ENCODE measurements at regions of chr3 and their contacts with region 1.

Region 1: DNA sequence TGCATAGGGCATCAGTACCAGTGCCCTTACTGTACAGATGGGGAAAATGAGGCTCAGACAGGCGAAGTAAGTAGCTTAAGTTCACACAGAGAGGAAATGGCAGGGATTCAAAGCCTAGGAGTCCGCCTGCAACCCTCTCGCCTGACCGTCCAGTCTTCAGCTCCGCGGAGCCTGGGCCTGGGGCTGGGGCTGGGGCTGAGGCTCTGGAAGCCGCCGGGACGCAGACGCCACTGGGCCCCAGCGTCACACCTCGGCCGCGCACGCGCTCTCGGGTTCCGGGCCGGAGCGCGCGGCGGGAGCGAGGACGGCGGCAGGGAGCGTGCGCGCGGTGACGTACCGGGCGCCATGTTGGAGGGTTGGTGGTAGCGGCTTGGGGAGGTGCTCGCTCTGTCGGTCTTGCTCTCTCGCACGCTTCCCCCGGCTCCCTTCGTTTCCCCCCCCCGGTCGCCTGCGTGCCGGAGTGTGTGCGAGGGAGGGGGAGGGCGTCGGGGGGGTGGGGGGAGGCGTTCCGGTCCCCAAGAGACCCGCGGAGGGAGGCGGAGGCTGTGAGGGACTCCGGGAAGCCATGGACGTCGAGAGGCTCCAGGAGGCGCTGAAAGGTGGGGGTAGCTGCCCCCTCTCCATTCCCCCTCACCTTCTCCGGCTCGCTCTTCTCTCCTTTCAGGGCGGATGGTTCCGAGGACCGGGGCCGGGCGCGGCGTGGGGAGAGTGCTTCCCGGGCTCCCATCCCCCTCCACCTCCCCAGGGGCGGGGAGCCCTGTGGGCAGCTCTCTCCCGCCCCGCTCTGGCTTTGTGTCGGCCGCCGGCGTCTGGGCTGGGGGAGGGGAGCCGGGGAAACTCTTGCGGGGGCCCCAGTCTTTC is at the start of gene PPP4R2:
- DNase-seq: peak; percentile 90
- H3K4me3 Mint-ChIP-seq: peak within 1 kb of the TSS; percentile 96
- H3K27ac Mint-ChIP-seq: peak within 1 kb of the TSS; percentile 96
- H3K4me1 Mint-ChIP-seq: peaks cover 49% of the 10 kb centered on the region
- H3K27me3 Mint-ChIP-seq: no peaks in the 10 kb centered on the region
- total RNA-seq, gene PPP4R2: 113 and 125 TPM in 2 replicates

Region 2: DNA sequence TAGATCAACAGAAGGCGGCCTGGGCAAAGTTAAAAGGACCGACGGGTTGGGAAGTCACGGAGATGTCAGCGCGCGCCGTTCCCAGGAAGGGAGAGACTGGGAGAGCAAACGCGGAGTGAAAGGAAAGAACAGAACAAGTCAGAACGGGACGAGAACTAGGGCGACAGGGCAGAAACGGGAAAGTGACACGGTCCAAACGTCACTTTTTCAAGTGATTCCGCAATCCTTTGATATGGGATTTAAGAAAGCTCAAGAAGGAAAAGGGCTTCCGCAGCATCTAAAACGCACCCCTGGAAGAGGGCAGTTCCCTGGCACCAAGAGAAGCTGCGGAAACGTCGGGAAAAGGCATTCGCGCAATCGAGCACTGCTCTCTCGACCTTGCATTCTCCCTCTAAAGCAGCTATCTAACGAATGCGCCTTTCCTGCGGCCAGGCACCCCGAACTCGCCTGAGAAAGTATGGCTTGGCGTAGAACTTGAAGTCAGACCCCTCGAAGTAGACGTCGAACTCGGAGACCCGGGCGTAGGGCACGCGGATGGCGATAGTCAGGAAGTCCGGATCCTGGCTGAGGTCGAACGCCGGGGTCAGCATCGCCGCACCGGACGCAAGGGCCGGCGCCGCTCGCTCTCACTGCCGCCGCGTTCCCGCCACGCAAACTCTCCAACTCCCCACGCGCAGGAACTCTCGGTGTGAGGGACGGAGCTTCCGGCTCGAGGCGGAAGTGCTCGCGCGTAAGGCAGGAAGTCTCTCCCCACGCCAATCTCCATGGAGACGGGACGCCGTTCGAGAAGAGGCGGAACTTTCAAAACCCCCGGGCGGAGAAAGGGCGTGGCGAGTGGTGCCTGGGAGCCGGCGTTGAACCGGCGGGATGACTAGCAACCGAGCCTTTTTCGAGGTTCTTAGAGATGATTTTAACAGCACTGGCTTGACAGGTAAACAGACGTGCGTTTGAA is 148.7 kb before region 1 on chr3 and contains the start of gene SHQ1:
- intact Hi-C with region 1: loop called (anchors 2 kb)
- DNase-seq: peak; percentile 92
- H3K4me3 Mint-ChIP-seq: peak within 1 kb of the TSS; percentile 99
- H3K27ac Mint-ChIP-seq: peak within 1 kb of the TSS; percentile 88
- H3K4me1 Mint-ChIP-seq: peaks cover 62% of the 10 kb centered on the region
- H3K27me3 Mint-ChIP-seq: peaks cover 9% of the 10 kb centered on the region
- total RNA-seq, gene SHQ1: 46.1 and 48.5 TPM in 2 replicates

Region 3: GRCh38 chr3:72960812-72961518 is 35.7 kb before region 1 on chr3:
- intact Hi-C with region 1: loop called (anchors 1 kb)
- DNase-seq: no peak
- H3K4me3 Mint-ChIP-seq: no peak overlapping the region
- H3K27ac Mint-ChIP-seq: no peak overlapping the region
- H3K4me1 Mint-ChIP-seq: peaks cover 41% of the 10 kb centered on the region
- H3K27me3 Mint-ChIP-seq: peaks cover 7% of the 10 kb centered on the region

Region 4: DNA sequence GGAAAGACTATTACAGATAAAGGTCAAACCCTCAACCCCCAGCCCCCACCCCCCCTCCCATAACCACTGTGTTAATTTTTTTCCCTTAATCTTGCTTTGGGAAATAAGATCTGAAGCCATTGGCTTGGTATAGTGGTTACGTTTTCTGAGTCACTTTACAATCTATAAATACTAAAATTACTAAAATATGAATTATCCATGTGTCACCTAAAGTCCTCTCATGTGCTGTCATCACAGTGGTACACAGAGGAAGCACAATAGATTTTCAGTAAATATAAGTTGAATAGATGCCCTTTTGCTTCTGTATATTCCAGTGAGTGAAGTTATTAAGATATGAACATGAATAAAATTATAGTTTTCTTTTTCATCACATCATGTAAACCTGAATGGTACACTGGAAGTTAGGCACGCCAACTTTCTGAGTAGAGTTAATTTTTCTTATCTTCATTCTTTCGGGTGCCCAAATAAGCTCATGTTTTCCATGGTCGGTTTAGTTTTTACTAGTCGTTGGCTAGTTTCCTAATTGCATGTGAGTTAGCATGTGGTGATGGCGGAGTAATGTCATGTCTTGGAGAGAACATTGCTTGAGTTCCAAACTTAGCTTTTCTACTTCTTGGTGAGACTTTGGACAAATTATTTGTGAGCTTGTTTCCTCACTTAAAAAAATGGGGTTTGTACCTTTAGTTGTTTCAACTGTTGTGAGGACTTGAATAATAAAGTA is 11.4 kb after region 1 on chr3:
- intact Hi-C with region 1: loop called (anchors 1 kb)
- DNase-seq: no peak
- H3K4me3 Mint-ChIP-seq: no peak overlapping the region
- H3K27ac Mint-ChIP-seq: peak overlapping the region; percentile 56
- H3K4me1 Mint-ChIP-seq: peaks cover 66% of the 10 kb centered on the region
- H3K27me3 Mint-ChIP-seq: no peaks in the 10 kb centered on the region

Region 5: GRCh38 chr3:73018790-73019441 is 22.2 kb after region 1 on chr3:
- intact Hi-C with region 1: no loop called
- DNase-seq: no peak
- H3K4me3 Mint-ChIP-seq: no peak overlapping the region
- H3K27ac Mint-ChIP-seq: peak overlapping the region; percentile 60
- H3K4me1 Mint-ChIP-seq: peaks cover 34% of the 10 kb centered on the region
- H3K27me3 Mint-ChIP-seq: no peaks in the 10 kb centered on the region

Region 6: GRCh38 chr3:73056014-73056844 is 59.5 kb after region 1 on chr3:
- intact Hi-C with region 1: loop called (anchors 1 kb)
- DNase-seq: no peak
- H3K4me3 Mint-ChIP-seq: no peak overlapping the region
- H3K27ac Mint-ChIP-seq: no peak overlapping the region
- H3K4me1 Mint-ChIP-seq: peaks cover 16% of the 10 kb centered on the region
- H3K27me3 Mint-ChIP-seq: no peaks in the 10 kb centered on the region

Region 7: GRCh38 chr3:73471986-73472787 is 475.5 kb after region 1 on chr3:
- intact Hi-C with region 1: no loop called
- DNase-seq: no peak
- H3K4me3 Mint-ChIP-seq: no peak overlapping the region
- H3K27ac Mint-ChIP-seq: no peak overlapping the region
- H3K4me1 Mint-ChIP-seq: no peaks in the 10 kb centered on the region
- H3K27me3 Mint-ChIP-seq: peaks cover 3% of the 10 kb centered on the region